Right lobe of liver (tissue), 6 donors: ENCODE measurements at regions of chr12 and their contacts with region 1.

Region 1: GRCh38 chr12:22121227-22121626 is 75.2 kb downstream of the CMAS start:
- DNase-seq: peak in 2 of 3 donors; percentile 34 to 51
- ATAC-seq: peak; percentile 55 to 73 (median 68)
- H3K4me3 ChIP-seq: no peak overlapping the region
- H3K27ac ChIP-seq: no peak overlapping the region
- H3K4me1 ChIP-seq: no peaks in the 10 kb centered on the region
- H3K27me3 ChIP-seq: no peaks in the 10 kb centered on the region
- CTCF ChIP-seq: peak; percentile 28 to 49 (median 38)
- POLR2A ChIP-seq: no peak

Region 2: DNA sequence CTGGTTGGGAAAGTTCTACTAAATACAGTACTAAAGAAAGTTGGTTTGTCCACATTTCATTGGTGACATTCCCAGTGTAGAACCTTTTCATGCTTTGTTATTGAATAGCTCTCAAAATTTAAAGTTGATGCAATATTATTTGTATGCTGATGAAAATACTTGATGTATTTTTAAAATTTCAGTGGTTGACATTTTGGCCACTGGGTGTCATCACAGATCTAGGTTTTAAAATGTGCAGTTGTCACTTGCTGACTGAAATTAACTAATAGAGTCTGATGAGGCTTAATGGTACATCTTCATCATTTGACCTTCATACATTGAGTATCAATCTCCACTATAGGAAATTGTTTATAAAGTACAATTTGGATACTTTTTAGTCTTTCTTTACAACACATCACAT is 38.1 kb before region 1 on chr12:
- intact Hi-C with region 1: no loop called
- DNase-seq: no peak
- ATAC-seq: peak; percentile 31 to 64 (median 51)
- H3K4me3 ChIP-seq: no peak overlapping the region
- H3K27ac ChIP-seq: no peak overlapping the region
- H3K4me1 ChIP-seq: no peaks in the 10 kb centered on the region
- H3K27me3 ChIP-seq: no peaks in the 10 kb centered on the region
- CTCF ChIP-seq: peak; percentile 40 to 54 (median 50)
- POLR2A ChIP-seq: no peak

Region 3: GRCh38 chr12:22334410-22335290 is 213.4 kb after region 1 on chr12 and contains the start of gene ST8SIA1:
- intact Hi-C with region 1: loop called in 1 of 2 experiments (anchors 10 kb)
- DNase-seq: peak in 1 of 3 donors; percentile 26
- ATAC-seq: peak; percentile 7 to 65 (median 61)
- H3K4me3 ChIP-seq: peak within 1 kb of the TSS; percentile 42 to 47 (median 42)
- H3K27ac ChIP-seq: no peak within 1 kb of the TSS
- H3K4me1 ChIP-seq: peaks cover 0 to 11% (median 0%) of the 10 kb centered on the region in 4 donors
- H3K27me3 ChIP-seq: no peaks in the 10 kb centered on the region
- CTCF ChIP-seq: no peak
- POLR2A ChIP-seq: no peak
- total RNA-seq, gene ST8SIA1: 0.16 to 0.37 (median 0.35) TPM in 3 of 6 experiments, not detected in the others